Right ventricle myocardium inferior (tissue), 1 donor: ENCODE measurements at regions of chr6 and their contacts with region 1.

Region 1: GRCh38 chr6:166556871-166557322 is 29.6 kb downstream of the RAMACL start:
- DNase-seq: peak; percentile 87
- ATAC-seq: peak; percentile 94

Region 2: DNA sequence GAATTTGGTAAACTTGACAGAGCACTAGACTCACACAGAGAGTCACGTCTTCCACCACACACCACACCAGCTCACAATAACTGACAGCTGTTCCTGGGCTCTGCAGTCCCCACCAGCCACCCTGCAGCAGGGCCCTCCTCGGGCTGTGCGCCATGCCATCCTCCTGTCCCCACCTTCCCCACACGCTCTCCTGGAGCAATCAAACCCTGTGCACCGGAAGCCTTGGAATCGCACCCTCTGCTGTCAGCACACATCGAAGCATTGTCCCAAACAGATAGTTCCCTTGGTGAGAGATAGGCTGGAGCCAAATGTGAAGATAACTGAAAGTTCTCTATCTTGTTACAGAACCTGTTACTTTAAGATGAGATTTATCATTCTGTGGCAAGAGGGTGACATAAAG is 580.2 kb before region 1 on chr6:
- intact Hi-C with region 1: no loop called
- DNase-seq: no peak
- ATAC-seq: peak; percentile 67

Region 3: DNA sequence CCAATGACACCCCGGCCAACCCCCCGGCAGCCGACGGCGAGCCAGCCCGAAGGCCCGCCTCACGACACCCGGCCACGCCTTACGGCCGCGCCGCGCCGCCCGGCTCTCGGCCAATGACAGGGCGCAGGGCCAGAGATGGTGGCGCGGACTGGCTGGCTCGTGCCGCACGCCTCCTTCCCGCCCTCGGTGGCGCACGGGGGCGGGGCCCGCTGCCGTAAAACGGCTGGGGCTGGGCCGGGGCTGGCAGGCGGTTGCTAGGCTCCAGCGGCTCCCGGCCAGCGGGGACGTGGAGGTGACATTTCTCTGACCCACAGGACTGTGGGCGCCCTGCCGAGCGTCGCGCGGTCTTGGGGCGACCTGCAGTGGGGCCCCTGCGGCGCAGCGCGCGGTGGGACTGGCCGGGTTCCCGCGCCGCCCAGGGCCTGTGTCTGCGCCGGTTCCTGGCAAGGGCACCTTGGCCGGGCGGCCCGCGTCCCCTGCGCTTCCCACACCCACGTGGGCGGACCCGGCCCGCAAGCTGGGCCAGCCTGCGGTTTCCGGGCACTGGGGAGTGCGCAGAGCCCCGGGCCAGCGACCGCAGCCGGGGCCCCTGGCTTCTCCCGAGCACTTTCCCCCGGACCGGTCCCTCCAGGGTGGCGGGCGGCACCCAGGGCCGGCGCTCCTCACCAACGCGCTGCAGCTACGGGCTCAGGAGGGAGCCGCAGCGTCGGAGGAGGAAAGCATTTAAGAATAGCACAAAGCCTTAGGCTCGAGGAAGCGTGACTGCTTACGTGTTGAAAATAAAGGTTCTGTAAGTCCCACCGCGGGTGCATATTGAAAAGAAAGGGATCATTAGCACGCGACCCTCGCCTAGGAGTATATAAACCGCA is 173.7 kb before region 1 on chr6 and contains the start of gene MPC1:
- intact Hi-C with region 1: loop called (anchors 5 kb)
- DNase-seq: peak; percentile 98
- ATAC-seq: peak; percentile 98
- total RNA-seq, gene MPC1: 381 TPM

Region 4: GRCh38 chr6:166575205-166575604 is 18.3 kb after region 1 on chr6:
- intact Hi-C with region 1: loop called (anchors 1 kb)
- DNase-seq: peak; percentile 57
- ATAC-seq: peak; percentile 90

Region 5: GRCh38 chr6:166627033-166627874 is 70.4 kb after region 1 on chr6 and contains the start of gene RPS6KA2:
- intact Hi-C with region 1: loop called (anchors 2 kb)
- DNase-seq: peak; percentile 100
- ATAC-seq: peak; percentile 93
- total RNA-seq, gene RPS6KA2: 55.5 TPM

Region 6: GRCh38 chr6:166691199-166691598 is 134.3 kb after region 1 on chr6:
- intact Hi-C with region 1: loop called (anchors 1 kb)
- DNase-seq: no peak
- ATAC-seq: peak; percentile 92